ENCODE measurements at regions of chr4 and their contacts with region 1.

Region 1: DNA sequence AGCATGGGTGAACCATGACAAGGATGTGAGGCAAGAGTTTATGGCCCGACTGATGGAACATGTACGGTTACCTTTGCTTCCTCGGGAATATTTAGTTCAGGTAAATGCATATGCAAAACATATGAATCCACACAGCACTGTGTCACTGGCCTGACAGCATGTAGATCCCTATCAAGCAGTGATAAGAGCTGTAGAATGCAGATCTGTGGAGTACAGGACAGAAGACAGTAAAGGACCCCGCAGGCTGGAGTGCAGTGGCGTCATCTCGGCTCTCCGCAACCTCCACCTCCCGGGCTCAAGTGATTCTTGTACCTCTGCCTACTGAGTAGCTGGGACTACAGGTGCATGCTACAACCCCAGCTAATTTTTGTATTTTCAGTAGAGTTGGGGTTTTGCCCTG is 29.8 kb upstream of the MSMO1 start:
- DNase-seq: no peak
- H3K4me3 ChIP-seq: no peak overlapping the region
- H3K27ac ChIP-seq: no peak overlapping the region
- H3K4me1 ChIP-seq: no peaks in the 10 kb centered on the region
- H3K27me3 ChIP-seq: no peaks in the 10 kb centered on the region
- CTCF ChIP-seq: no peak
- POLR2A ChIP-seq: no peak

Region 2: DNA sequence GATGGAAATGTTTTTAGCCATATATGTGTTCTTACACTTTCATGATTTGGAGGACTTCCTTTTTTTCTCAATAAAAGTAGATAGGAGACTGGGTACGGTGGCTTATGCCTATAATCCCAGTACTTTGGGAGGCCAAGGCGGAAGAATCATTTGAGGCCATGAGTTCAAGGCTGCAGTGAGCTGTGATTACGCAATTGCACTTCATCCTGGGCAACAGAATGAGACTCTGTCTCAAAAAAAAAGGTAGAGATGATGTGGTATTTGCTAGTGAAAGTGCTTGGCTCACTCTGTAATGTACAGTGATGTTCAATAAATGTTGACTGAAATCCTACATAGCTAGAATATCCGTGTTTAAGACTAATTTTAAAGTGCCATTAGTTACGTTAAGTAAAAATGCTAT is 62.9 kb before region 1 on chr4:
- intact Hi-C with region 1: loop called (anchors 2 kb)
- DNase-seq: no peak
- H3K4me3 ChIP-seq: no peak overlapping the region
- H3K27ac ChIP-seq: no peak overlapping the region
- H3K4me1 ChIP-seq: no peaks in the 10 kb centered on the region
- H3K27me3 ChIP-seq: no peaks in the 10 kb centered on the region
- CTCF ChIP-seq: no peak
- POLR2A ChIP-seq: no peak

Measured in testis (tissue), 5 donors.